ENCODE measurements at regions of chr22 and their contacts with region 1.

Region 1: GRCh38 chr22:35399678-35400334 is at the start of gene MCM5:
- DNase-seq: peak; percentile 94
- ATAC-seq: peak; percentile 94
- H3K4me3 ChIP-seq: peak within 1 kb of the TSS; percentile 88 to 97 (median 89)
- H3K27ac ChIP-seq: peak within 1 kb of the TSS; percentile 88
- H3K4me1 ChIP-seq: peaks cover 73% of the 10 kb centered on the region
- H3K27me3 ChIP-seq: no peaks in the 10 kb centered on the region
- CTCF ChIP-seq: no peak
- EP300 ChIP-seq: no peak
- POLR2A ChIP-seq: peak; percentile 53 to 70
- RAD21 ChIP-seq: no peak
- total RNA-seq, gene MCM5: 87.1 and 93.5 TPM in 2 replicates

Region 2: GRCh38 chr22:35380547-35381423 is 19.0 kb before region 1 on chr22 and contains the start of gene HMOX1:
- CTCF ChIA-PET with region 1: no interaction called
- POLR2A ChIA-PET with region 1: interaction called, 11 read pairs
- in situ Hi-C with region 1: no loop called
- intact Hi-C with region 1: loop called (anchors 2 kb)
- DNase-seq: peak; percentile 73
- ATAC-seq: peak; percentile 83
- H3K4me3 ChIP-seq: peak within 1 kb of the TSS; percentile 61 to 92 (median 81)
- H3K27ac ChIP-seq: peak within 1 kb of the TSS; percentile 76
- H3K4me1 ChIP-seq: peaks cover 87% of the 10 kb centered on the region
- H3K27me3 ChIP-seq: no peaks in the 10 kb centered on the region; a peak in 1 of 5 replicates
- CTCF ChIP-seq: peak; percentile 72
- EP300 ChIP-seq: no peak
- POLR2A ChIP-seq: peak; percentile 79 to 93
- RAD21 ChIP-seq: peak; percentile 71
- total RNA-seq, gene HMOX1: 53.6 and 54.1 TPM in 2 replicates

Measured in HepG2 (cell line).